ENCODE measurements at regions of chr11 and their contacts with region 1.

Region 1: DNA sequence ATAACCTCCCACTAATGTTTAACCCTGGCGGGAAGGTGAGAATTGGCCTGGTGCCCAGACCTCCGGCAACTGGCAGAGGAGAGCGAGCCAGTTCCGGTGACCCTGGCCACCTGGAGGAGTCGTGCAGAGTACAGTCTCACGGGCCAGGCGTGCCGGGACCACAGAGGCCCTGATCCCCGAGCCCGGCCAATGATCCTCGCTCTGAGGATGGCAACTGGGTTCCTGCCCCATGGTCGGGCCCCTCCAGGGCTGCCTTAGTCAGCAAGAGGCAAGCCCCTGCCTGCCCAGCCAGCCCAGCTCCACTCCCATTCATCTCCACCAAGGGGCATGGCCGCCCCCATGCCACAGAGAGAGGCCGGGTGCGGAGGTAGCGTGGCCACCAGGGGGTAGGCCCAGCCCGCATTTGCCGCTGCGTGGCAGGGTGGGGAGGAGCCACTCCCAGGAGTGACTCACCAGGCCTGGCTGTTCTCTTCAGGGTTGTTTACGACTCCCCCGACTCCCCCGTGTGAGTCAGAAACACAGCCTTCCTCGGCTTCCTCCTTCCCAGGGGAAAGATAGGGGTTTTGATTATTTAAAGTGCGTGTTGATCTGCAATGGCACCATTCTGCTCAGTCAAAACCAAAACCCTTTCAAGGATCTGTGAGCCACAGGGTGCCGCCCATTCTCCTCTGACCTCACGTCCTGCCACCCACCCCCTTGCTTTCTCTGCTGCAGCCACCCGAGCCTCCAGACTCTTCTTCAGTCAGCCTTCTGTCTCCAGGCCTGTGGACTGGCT is at the start of gene SLC25A45:
- DNase-seq: peak; percentile 99
- H3K4me3 Mint-ChIP-seq: peak within 1 kb of the TSS; percentile 68
- H3K27ac Mint-ChIP-seq: peak within 1 kb of the TSS; percentile 97
- H3K4me1 Mint-ChIP-seq: peaks cover 26% of the 10 kb centered on the region
- H3K27me3 Mint-ChIP-seq: no peaks in the 10 kb centered on the region
- CTCF ChIP-seq: peak; percentile 86
- total RNA-seq, gene SLC25A45: 3.9 and 4.9 TPM in 2 replicates

Region 2: GRCh38 chr11:65366340-65366773 is 15.9 kb before region 1 on chr11:
- CTCF ChIA-PET with region 1: interaction called, 3 read pairs
- POLR2A ChIA-PET with region 1: interaction called, 21 read pairs
- intact Hi-C with region 1: no loop called
- DNase-seq: peak; percentile 87
- H3K4me3 Mint-ChIP-seq: no peak overlapping the region
- H3K27ac Mint-ChIP-seq: no peak overlapping the region
- H3K4me1 Mint-ChIP-seq: peaks cover 9% of the 10 kb centered on the region
- H3K27me3 Mint-ChIP-seq: no peaks in the 10 kb centered on the region
- CTCF ChIP-seq: peak; percentile 72

Region 3: DNA sequence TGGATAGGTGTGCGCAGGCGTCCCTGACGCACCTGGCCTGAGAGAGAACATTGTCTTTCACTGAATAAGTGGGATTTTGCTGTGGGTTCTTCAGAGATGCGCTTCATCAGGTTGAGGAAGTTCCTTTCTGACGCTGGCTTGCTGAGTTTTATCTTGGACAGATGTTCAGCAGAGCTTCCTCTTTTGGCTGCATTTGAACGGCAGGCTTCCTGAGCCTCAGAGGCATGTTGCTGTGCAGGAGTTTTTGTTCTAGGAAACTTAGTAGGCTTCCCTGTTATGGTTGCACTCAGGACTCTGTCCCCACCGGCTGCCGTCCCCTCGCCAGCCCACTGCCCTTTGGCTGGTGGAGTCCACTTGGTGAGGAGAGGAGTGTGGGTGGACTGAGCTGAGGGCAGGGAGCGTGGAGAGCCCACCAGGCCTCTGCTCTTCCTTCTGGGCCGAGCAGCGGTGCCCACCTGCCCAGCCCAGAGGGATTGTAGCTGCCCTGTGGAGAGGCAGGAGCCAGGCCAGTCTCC is 21.4 kb after region 1 on chr11:
- CTCF ChIA-PET with region 1: no interaction called
- POLR2A ChIA-PET with region 1: interaction called, 15 read pairs
- intact Hi-C with region 1: no loop called
- DNase-seq: no peak
- H3K4me3 Mint-ChIP-seq: no peak overlapping the region
- H3K27ac Mint-ChIP-seq: no peak overlapping the region
- H3K4me1 Mint-ChIP-seq: no peaks in the 10 kb centered on the region
- H3K27me3 Mint-ChIP-seq: no peaks in the 10 kb centered on the region
- CTCF ChIP-seq: no peak

Region 4: GRCh38 chr11:65440831-65441499 is 58.7 kb after region 1 on chr11:
- CTCF ChIA-PET with region 1: no interaction called
- POLR2A ChIA-PET with region 1: interaction called, 11 read pairs
- intact Hi-C with region 1: no loop called
- DNase-seq: peak; percentile 40
- H3K4me3 Mint-ChIP-seq: peak overlapping the region; percentile 41
- H3K27ac Mint-ChIP-seq: peak overlapping the region; percentile 93
- H3K4me1 Mint-ChIP-seq: peaks cover 72% of the 10 kb centered on the region
- H3K27me3 Mint-ChIP-seq: no peaks in the 10 kb centered on the region
- CTCF ChIP-seq: no peak

Region 5: GRCh38 chr11:65471410-65471762 is 89.2 kb after region 1 on chr11:
- CTCF ChIA-PET with region 1: no interaction called
- POLR2A ChIA-PET with region 1: interaction called, 8 read pairs
- intact Hi-C with region 1: loop called (anchors 2 kb)
- DNase-seq: peak; percentile 85
- H3K4me3 Mint-ChIP-seq: no peak overlapping the region
- H3K27ac Mint-ChIP-seq: peak overlapping the region; percentile 97
- H3K4me1 Mint-ChIP-seq: peaks cover 15% of the 10 kb centered on the region
- H3K27me3 Mint-ChIP-seq: no peaks in the 10 kb centered on the region
- CTCF ChIP-seq: peak; percentile 25